Activated T-helper 1 cell treated with anti-CD3 and anti-CD28 coated beads, Interleukin-12 subunit alpha, Interleukin-12 subunit beta, Interleukin-2, Interleukin-4 antibody, amounts not matched to agents 30 ng/mL and 10 ng/mL and 1 ng/mL, durations not matched to agents 14 hours and 24 hours and 36 hours (primary cell): ENCODE measurements at regions of chr10 and their contacts with region 1.

Region 1: GRCh38 chr10:23199768-23200511 is 7.8 kb downstream of the PTF1A start:
- DNase-seq: no peak
- H3K4me3 Mint-ChIP-seq: no peak overlapping the region
- H3K27ac Mint-ChIP-seq: peak overlapping the region; percentile 7
- H3K4me1 Mint-ChIP-seq: no peaks in the 10 kb centered on the region
- H3K27me3 Mint-ChIP-seq: peaks cover 80% of the 10 kb centered on the region

Region 2: DNA sequence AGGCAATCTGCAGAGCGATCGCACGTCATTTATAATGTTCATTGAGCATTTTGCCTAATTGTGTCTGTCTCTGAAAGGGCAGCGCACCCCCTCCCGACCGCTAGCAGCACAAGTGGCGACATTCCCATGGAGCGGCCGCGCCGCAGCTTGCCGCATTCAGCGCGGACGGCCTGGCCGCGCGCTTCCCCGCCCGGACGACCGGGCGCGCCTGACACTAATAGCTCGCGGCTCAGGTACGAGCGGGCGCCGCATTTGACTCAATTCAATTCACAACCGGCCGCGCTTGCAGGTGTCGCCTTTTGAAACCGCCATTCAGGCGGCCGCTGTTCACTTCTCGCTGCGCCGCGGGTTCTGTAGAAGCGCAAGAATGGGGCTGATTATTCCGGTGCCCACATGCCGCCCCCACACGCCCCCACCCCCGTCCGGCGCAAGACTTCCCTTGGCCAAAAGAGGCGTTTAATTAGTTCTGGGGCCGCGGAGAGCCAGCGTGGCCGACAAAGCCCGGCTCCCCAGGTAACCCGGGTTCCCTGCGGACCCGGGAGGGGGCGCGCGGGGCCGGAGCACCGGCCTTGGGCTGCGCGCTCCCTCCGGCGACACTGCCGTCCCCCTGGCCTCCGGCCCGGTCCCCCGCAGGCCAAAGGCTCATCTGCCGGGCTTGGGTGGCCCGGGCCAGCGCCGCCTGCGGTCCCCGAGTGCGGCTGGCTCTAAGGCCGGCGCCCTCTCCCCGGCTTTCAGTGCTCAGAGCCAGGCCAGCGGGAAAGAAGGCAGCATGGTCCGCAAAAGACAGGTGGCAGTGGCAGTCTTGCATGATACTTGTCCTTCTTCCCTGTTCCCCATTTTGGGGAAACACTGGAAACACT is 26.5 kb before region 1 on chr10:
- intact Hi-C with region 1: loop called (anchors 2 kb)
- DNase-seq: no peak
- H3K4me3 Mint-ChIP-seq: no peak overlapping the region
- H3K27ac Mint-ChIP-seq: no peak overlapping the region
- H3K4me1 Mint-ChIP-seq: no peaks in the 10 kb centered on the region
- H3K27me3 Mint-ChIP-seq: peaks cover 61% of the 10 kb centered on the region